PC-9 (cell line): ENCODE measurements at regions of chr1 and their contacts with region 1.

Region 1: DNA sequence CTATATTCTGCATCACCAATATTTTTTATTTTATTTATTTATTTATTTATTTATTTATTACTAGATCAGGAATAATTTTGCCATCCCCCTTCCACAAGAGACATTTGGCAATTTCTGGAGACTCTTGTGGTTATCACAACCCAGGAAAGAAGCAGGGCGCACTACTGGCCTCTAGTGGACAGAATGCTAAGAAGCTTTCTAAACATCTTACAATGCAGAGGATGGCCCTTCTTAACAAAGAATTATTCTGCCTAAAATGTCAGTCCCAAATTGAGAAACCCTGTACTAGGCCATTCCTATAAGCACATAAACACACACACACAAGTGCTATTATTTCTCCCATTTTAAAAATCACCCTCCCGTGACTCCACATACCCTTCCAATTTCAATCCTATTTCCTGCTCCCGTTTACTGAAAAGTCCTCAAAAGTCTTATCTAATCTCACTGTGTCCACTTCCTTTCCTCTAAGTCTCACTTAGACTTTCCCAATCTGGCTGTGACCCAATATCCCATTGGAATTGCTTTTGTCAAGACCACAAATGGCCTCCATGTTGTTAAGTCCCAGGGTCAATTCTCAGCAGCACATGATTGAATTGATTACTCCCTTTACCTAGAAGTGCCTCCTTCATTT is 43.7 kb upstream of the RNF11 start:
- DNase-seq: peak; percentile 60 to 65
- H3K4me3 ChIP-seq: no peak overlapping the region
- H3K27ac ChIP-seq: no peak overlapping the region
- H3K4me1 ChIP-seq: no peaks in the 10 kb centered on the region
- H3K27me3 ChIP-seq: no peaks in the 10 kb centered on the region
- CTCF ChIP-seq: peak; percentile 83

Region 2: DNA sequence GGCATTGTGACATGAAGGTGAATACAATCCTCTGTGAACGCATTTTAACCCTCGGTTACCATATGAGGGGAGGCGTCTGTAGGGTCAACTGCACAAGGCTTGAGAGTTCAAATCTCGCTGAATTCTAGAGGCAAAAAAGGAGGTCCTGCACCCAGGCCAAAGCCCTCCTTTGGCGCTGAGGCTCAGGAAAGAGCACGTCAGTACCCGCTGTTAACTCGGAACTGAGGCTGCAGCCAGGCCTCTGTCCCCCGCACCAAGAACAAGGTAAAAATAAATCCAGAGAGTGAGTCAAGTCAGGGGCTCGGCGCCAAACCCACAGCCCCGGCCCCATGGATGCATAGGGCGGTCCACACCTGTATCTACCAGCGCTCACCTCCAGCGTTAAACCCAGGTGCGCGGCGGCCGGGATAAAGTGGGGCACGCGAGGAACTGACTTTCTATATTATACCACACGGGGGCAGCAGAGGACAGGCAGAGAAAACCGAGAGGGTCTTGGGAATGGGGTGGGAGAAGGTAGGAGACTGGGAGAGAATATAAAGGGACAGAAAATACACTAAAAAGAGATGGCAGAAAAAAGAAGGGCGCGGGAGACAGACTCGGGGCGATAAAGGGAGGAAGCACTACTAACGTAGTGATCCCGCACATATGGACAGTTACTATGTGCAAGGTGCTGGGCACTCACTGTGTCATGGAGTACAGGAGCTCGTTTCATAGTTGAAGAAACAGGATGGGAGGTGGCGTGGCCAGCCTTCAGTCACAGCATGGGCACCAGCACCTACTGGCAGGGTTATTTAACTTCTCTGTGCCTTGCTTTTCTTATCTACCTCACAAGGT is 823.9 kb before region 1 on chr1:
- CTCF ChIA-PET with region 1: no interaction called
- POLR2A ChIA-PET with region 1: no interaction called
- intact Hi-C with region 1: loop called (anchors 2 kb)
- DNase-seq: peak in 1 of 2 experiments; percentile 23
- H3K4me3 ChIP-seq: no peak overlapping the region
- H3K27ac ChIP-seq: no peak overlapping the region
- H3K4me1 ChIP-seq: no peaks in the 10 kb centered on the region
- H3K27me3 ChIP-seq: peaks cover 6% of the 10 kb centered on the region; the same call in 1 of the 2 replicates
- CTCF ChIP-seq: peak; percentile 83

Region 3: GRCh38 chr1:50693834-50694233 is 498.5 kb before region 1 on chr1:
- CTCF ChIA-PET with region 1: no interaction called
- POLR2A ChIA-PET with region 1: no interaction called
- intact Hi-C with region 1: no loop called
- DNase-seq: no peak
- H3K4me3 ChIP-seq: no peak overlapping the region
- H3K27ac ChIP-seq: no peak overlapping the region
- H3K4me1 ChIP-seq: no peaks in the 10 kb centered on the region
- H3K27me3 ChIP-seq: no peaks in the 10 kb centered on the region
- CTCF ChIP-seq: no peak

Region 4: DNA sequence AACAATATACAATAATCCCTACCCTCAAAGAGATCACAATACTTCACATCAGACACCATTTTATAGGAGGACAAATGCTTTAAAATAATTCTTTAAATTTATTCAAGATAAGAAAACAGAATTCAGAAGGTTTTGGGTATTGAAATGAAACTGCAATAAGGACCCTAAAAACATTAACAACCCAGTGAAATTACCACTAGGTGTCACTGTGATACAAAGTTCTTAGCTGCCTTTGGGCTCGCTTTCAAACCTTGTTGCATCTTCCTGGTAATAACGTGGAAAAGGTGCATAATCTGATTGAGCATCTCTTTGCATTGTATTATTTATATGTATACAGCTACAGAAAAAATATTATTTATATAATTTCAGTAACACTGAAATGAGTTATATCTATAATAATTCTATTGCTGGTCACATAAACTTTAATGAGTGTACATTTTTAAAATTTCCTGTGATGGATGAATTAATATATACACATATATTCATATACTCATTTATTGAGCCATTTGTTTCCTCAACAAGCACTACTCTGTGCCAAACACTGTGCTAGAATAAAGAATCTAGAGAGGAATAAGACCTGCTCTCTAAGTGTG is 417.5 kb before region 1 on chr1:
- CTCF ChIA-PET with region 1: interaction called, 9 read pairs
- POLR2A ChIA-PET with region 1: no interaction called
- intact Hi-C with region 1: loop called (anchors 1 kb)
- DNase-seq: no peak
- H3K4me3 ChIP-seq: no peak overlapping the region
- H3K27ac ChIP-seq: no peak overlapping the region
- H3K4me1 ChIP-seq: no peaks in the 10 kb centered on the region
- H3K27me3 ChIP-seq: no peaks in the 10 kb centered on the region
- CTCF ChIP-seq: peak; percentile 83

Region 5: GRCh38 chr1:50929376-50929958 is 262.9 kb before region 1 on chr1:
- CTCF ChIA-PET with region 1: interaction called, 8 read pairs
- POLR2A ChIA-PET with region 1: no interaction called
- intact Hi-C with region 1: loop called (anchors 1 kb)
- DNase-seq: no peak
- H3K4me3 ChIP-seq: no peak overlapping the region
- H3K27ac ChIP-seq: peak overlapping the region; percentile 29; the same call in 1 of the 2 replicates
- H3K4me1 ChIP-seq: no peaks in the 10 kb centered on the region
- H3K27me3 ChIP-seq: no peaks in the 10 kb centered on the region
- CTCF ChIP-seq: peak; percentile 77

Region 6: GRCh38 chr1:51235673-51236530 is 43.6 kb after region 1 on chr1 and contains the start of gene RNF11:
- CTCF ChIA-PET with region 1: interaction called, 3 read pairs
- POLR2A ChIA-PET with region 1: interaction called, 15 read pairs
- intact Hi-C with region 1: loop called (anchors 2 kb)
- DNase-seq: peak; percentile 71 to 91
- H3K4me3 ChIP-seq: peak within 1 kb of the TSS; percentile 99
- H3K27ac ChIP-seq: peak within 1 kb of the TSS; percentile 54
- H3K4me1 ChIP-seq: peaks cover 56% of the 10 kb centered on the region
- H3K27me3 ChIP-seq: no peaks in the 10 kb centered on the region
- CTCF ChIP-seq: no peak
- total RNA-seq, gene RNF11: 63.0 and 73.2 TPM in 2 replicates

Region 7: DNA sequence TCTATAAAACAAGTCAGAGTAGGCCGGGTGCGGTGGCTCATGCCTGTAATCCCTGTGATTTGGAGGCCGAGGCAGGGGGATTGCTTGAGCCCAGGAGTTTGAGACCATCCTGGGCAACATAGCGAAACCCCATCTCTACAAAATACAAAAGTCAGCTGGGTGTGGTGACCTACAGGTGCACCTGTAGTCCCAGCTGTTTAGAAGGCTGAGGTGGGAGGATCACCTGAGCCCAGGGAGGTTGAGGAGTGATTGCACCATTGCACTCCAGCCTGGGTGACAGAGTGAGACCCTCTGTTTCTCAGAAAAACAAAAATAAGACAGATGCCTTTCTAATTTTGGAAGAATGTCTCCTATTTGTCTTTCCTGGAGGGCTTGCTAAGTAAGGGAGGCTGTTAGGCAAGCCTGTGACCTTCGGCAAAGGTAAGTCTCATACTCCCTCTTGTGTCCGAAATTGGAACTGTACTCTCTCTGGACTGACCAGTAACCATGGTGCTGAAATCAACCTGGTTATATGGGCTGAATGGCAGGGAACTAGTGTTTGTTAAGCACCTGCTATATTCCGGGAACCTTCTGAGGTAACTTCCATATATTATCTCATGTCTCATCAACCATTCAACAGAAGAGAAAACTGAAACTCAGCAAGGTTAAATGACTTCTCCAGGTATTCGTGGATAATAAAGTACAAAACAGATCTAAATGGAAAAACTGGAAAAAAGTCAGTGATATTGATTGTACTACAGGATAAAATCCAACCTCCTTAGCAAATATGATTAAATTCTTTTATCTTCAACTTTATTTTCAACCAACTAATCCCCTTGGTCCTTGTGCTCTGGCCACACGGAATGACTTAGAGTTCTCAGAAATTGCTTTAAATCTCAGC is 810.0 kb after region 1 on chr1:
- CTCF ChIA-PET with region 1: no interaction called
- POLR2A ChIA-PET with region 1: no interaction called
- intact Hi-C with region 1: loop called (anchors 5 kb)
- DNase-seq: peak; percentile 67
- H3K4me3 ChIP-seq: no peak overlapping the region
- H3K27ac ChIP-seq: no peak overlapping the region
- H3K4me1 ChIP-seq: no peaks in the 10 kb centered on the region
- H3K27me3 ChIP-seq: no peaks in the 10 kb centered on the region
- CTCF ChIP-seq: peak; percentile 94